ENCODE measurements at regions of chr1 and their contacts with region 1.

Region 1: DNA sequence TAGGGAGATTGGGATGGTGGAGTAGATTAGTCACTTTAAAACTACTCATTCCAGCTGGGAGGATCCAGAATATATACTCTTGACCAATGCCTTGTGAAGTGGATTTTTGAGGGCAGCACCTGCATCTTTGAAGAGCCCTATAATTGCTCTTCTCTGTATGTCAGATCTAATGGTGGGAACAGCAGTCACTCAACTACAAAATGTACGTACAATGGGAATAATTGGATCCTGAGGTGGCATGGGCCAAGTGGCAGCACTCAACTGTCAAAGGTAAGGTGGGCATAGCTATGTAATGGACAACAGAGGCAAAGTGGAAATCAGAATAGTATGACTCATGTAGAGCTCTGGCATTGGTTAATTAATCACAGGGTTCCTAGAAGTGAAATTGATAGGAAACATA is 51.6 kb upstream of the KIAA0040 start:
- DNase-seq: no peak
- H3K4me3 ChIP-seq: no peak overlapping the region
- H3K27ac ChIP-seq: no peak overlapping the region
- H3K4me1 ChIP-seq: no peaks in the 10 kb centered on the region
- H3K27me3 ChIP-seq: no peaks in the 10 kb centered on the region
- CTCF ChIP-seq: no peak
- POLR2A ChIP-seq: no peak

Region 2: DNA sequence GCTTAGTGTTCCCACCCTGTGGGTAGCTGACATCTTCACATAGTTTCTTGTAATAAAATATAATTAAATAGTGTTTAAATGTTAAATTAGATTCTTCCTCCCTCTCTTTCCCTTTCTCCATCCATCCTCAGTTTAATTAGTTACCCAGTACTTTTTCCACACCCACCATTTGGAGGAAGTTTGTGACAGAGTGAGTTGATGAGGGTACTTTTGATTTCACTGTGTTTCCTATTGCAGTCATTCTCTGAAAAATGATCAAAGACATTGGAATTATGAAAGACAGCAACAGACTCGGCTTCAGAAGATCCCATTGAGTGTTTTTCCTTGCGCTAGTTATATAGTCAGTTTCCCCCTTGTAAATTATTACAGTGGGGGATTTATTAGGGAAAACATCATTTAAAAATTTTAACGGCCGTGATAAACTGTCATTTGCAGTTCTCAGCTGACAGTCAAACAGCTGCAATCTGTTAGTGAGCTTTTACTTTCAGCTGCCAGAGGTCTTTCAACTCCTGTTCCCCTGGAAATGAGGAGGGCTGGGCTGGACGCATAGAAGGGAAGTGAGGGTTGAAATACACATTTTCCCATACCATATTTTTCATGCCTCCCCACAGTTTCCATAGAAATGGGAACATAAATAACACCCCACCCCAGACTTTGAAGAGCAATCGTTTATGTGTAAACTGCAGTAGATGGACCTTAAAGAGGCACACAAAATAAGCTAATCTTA is 305.8 kb before region 1 on chr1:
- intact Hi-C with region 1: no loop called
- DNase-seq: no peak
- H3K4me3 ChIP-seq: peak overlapping the region in 2 of 8 donors; percentile 0 to 36
- H3K27ac ChIP-seq: peak overlapping the region in 6 of 8 donors; percentile 5 to 69 (median 54)
- H3K4me1 ChIP-seq: peaks cover 0 to 43% (median 18%) of the 10 kb centered on the region in 6 donors
- H3K27me3 ChIP-seq: no peaks in the 10 kb centered on the region
- CTCF ChIP-seq: no peak
- POLR2A ChIP-seq: no peak

Region 3: GRCh38 chr1:175043824-175044223 is 200.4 kb before region 1 on chr1:
- intact Hi-C with region 1: no loop called
- DNase-seq: no peak
- H3K4me3 ChIP-seq: no peak overlapping the region
- H3K27ac ChIP-seq: peak overlapping the region in 3 of 8 donors; percentile 33 to 48 (median 34)
- H3K4me1 ChIP-seq: no peaks in the 10 kb centered on the region
- H3K27me3 ChIP-seq: peaks cover 0 to 7% (median 0%) of the 10 kb centered on the region in 7 donors
- CTCF ChIP-seq: no peak
- POLR2A ChIP-seq: no peak

Region 4: DNA sequence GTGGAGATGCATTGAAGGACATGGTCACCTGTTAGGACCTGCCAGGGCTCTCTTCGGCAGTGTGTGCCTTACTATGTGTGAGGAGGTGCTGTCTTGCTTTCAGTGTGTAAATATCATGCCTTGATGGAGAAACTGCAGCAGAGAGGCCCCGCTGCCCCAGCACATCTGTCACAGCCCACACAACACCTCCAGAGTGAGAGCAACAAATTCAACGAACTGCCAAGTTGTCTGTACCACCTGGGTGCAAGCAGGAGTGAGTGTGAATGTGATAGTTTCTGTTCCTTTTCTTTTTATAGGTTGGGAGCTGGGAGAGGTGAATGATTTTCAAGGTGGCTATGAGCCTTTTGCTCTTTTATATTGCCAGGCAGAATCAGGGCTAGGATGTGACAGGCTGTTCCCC is 63.0 kb after region 1 on chr1:
- intact Hi-C with region 1: loop called (anchors 10 kb)
- DNase-seq: no peak
- H3K4me3 ChIP-seq: no peak overlapping the region
- H3K27ac ChIP-seq: peak overlapping the region in 1 of 8 donors; percentile 84
- H3K4me1 ChIP-seq: peaks cover 0 to 19% (median 5%) of the 10 kb centered on the region in 6 donors
- H3K27me3 ChIP-seq: no peaks in the 10 kb centered on the region
- CTCF ChIP-seq: no peak
- POLR2A ChIP-seq: no peak

Region 5: DNA sequence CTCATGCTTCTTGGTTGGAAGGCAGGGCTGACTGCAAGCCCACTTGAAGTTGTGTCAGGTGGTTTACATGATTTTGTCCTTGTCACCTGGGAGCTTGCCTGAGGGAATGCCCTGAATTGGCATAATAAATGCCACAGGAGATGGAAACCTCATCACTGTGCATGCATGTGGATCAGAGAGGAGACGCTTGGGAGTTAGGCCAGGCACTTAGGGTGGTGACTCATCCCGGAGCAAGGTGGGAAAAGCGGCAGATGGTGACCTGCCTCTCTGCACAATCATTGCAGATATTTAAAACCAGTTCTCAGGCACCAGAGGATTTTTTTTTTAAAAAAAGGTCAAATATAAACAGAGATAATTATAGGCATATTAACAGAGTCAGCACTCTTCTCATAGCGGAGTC is 150.5 kb after region 1 on chr1:
- intact Hi-C with region 1: no loop called
- DNase-seq: no peak
- H3K4me3 ChIP-seq: no peak overlapping the region
- H3K27ac ChIP-seq: no peak overlapping the region
- H3K4me1 ChIP-seq: no peaks in the 10 kb centered on the region
- H3K27me3 ChIP-seq: no peaks in the 10 kb centered on the region
- CTCF ChIP-seq: no peak
- POLR2A ChIP-seq: no peak

Region 6: GRCh38 chr1:175443332-175443731 is 199.1 kb after region 1 on chr1:
- intact Hi-C with region 1: no loop called
- DNase-seq: no peak
- H3K4me3 ChIP-seq: no peak overlapping the region
- H3K27ac ChIP-seq: no peak overlapping the region
- H3K4me1 ChIP-seq: no peaks in the 10 kb centered on the region
- H3K27me3 ChIP-seq: no peaks in the 10 kb centered on the region
- CTCF ChIP-seq: no peak
- POLR2A ChIP-seq: no peak